Activated CD4-positive, alpha-beta memory T cell treated with anti-CD3 and anti-CD28 coated beads for 36 hours (primary cell): ENCODE measurements at regions of chr19 and their contacts with region 1.

Region 1: GRCh38 chr19:8697671-8698432 is 743 bp downstream of the ACTL9 start:
- DNase-seq: peak; percentile 17
- H3K4me3 Mint-ChIP-seq: no peak overlapping the region
- H3K27ac Mint-ChIP-seq: no peak overlapping the region
- H3K4me1 Mint-ChIP-seq: peaks cover 33% of the 10 kb centered on the region
- H3K27me3 Mint-ChIP-seq: no peaks in the 10 kb centered on the region

Region 2: DNA sequence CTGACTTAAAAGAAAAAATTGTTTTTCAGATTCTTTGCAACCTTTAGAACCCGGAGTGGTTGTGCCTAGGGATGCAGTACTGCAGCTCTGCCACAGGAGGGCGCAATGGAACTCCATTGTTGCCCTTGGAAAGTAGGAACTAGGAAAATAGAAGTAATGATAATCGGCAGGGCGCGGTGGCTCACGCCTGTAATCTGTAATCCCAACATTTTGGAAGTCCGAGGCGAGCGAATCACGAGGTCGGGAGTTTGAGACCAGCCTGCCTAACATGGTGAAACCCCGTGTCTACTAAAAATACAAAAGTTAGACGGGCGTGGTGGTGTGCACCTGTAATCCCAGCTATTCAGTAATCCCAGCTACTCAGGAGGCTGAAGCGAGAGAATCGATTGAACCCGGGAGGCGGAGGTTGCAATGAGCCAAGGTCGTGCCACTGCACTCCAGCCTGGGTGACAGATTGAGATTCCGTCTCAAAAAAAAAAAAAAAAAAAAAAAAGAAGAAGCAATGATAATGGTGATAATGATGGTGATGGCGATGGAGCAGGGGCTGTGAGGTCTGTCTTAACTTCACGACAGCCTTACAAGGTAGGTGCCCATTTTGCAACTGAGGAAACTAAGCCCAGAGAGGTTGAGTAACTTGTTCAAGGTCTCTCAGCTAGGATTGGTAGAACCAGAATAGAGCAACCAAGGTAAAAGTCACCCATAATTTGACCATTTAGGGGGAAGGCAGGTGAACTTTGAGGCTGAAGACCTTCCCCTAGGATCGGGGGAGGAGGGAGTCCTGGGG is 81.8 kb before region 1 on chr19:
- CTCF ChIA-PET with region 1: interaction called, 17 read pairs
- POLR2A ChIA-PET with region 1: no interaction called
- intact Hi-C with region 1: no loop called
- DNase-seq: peak; percentile 77
- H3K4me3 Mint-ChIP-seq: no peak overlapping the region
- H3K27ac Mint-ChIP-seq: no peak overlapping the region
- H3K4me1 Mint-ChIP-seq: peaks cover 11% of the 10 kb centered on the region
- H3K27me3 Mint-ChIP-seq: no peaks in the 10 kb centered on the region

Region 3: DNA sequence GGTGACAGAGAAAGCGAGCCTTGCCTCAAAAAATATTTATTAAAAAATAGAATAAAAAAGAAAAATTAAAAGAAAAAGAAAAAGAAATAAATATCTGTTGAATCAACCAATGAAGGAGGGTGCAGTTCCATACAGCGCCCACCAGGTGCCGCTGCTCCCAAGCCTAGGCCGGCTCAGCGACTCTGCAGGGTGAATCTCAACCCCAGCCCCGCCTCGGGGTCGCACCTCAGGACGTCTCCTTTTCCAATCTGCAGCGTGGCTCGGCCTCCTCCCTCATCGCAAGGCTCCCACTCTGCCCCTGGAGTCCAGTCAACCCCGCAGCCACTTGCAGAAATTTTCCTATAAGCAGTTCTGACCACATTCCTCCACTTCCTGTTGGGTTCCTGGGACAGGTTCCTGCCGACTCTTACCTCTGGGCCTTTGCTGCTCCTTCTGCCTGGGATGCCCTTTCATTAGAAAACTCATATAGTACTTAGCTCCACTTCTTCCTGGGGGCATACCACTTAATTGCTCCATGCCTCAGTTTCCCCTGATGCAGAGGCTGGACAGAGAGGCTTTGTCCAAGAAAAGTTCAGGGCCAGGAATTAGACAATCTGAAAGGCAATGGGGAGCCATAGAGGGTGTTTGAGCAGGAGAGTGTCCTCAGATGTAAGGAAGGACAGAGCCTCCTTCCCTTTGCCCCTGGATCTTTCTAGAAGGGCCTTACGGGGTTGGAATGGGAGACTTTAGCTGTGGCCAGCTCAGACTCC is 43.1 kb before region 1 on chr19:
- CTCF ChIA-PET with region 1: interaction called, 173 read pairs
- POLR2A ChIA-PET with region 1: no interaction called
- intact Hi-C with region 1: loop called (anchors 1 kb)
- DNase-seq: peak; percentile 72
- H3K4me3 Mint-ChIP-seq: peak overlapping the region; percentile 25
- H3K27ac Mint-ChIP-seq: no peak overlapping the region
- H3K4me1 Mint-ChIP-seq: peaks cover 14% of the 10 kb centered on the region
- H3K27me3 Mint-ChIP-seq: no peaks in the 10 kb centered on the region

Region 4: GRCh38 chr19:8663920-8664670 is 33.8 kb before region 1 on chr19:
- CTCF ChIA-PET with region 1: interaction called, 14 read pairs
- POLR2A ChIA-PET with region 1: no interaction called
- intact Hi-C with region 1: no loop called
- DNase-seq: peak; percentile 69
- H3K4me3 Mint-ChIP-seq: no peak overlapping the region
- H3K27ac Mint-ChIP-seq: peak overlapping the region; percentile 38
- H3K4me1 Mint-ChIP-seq: peaks cover 36% of the 10 kb centered on the region
- H3K27me3 Mint-ChIP-seq: no peaks in the 10 kb centered on the region

Region 5: GRCh38 chr19:8731428-8732169 is 33.7 kb after region 1 on chr19:
- CTCF ChIA-PET with region 1: no interaction called
- POLR2A ChIA-PET with region 1: no interaction called
- intact Hi-C with region 1: no loop called
- DNase-seq: peak; percentile 25
- H3K4me3 Mint-ChIP-seq: no peak overlapping the region
- H3K27ac Mint-ChIP-seq: no peak overlapping the region
- H3K4me1 Mint-ChIP-seq: no peaks in the 10 kb centered on the region
- H3K27me3 Mint-ChIP-seq: peaks cover 1% of the 10 kb centered on the region